Endothelial cell of umbilical vein (primary cell): ENCODE measurements at regions of chr19 and their contacts with region 1.

Region 1: GRCh38 chr19:16382775-16383543 is 58.3 kb downstream of the KLF2 start:
- DNase-seq: peak; percentile 86
- H3K4me3 ChIP-seq: no peak overlapping the region
- H3K27ac ChIP-seq: peak overlapping the region; percentile 46
- H3K4me1 ChIP-seq: peaks cover 6% of the 10 kb centered on the region
- H3K27me3 ChIP-seq: no peaks in the 10 kb centered on the region
- CTCF ChIP-seq: peak; percentile 78 to 87
- POLR2A ChIP-seq: no peak

Region 2: GRCh38 chr19:15629003-15629880 is 753.7 kb before region 1 on chr19:
- CTCF ChIA-PET with region 1: interaction called, 5 read pairs
- POLR2A ChIA-PET with region 1: no interaction called
- dilution Hi-C with region 1: no loop called
- intact Hi-C with region 1: loop called (anchors 5 kb)
- DNase-seq: peak; percentile 40
- H3K4me3 ChIP-seq: no peak overlapping the region
- H3K27ac ChIP-seq: no peak overlapping the region
- H3K4me1 ChIP-seq: no peaks in the 10 kb centered on the region
- H3K27me3 ChIP-seq: no peaks in the 10 kb centered on the region
- CTCF ChIP-seq: peak; percentile 83
- POLR2A ChIP-seq: no peak

Region 3: DNA sequence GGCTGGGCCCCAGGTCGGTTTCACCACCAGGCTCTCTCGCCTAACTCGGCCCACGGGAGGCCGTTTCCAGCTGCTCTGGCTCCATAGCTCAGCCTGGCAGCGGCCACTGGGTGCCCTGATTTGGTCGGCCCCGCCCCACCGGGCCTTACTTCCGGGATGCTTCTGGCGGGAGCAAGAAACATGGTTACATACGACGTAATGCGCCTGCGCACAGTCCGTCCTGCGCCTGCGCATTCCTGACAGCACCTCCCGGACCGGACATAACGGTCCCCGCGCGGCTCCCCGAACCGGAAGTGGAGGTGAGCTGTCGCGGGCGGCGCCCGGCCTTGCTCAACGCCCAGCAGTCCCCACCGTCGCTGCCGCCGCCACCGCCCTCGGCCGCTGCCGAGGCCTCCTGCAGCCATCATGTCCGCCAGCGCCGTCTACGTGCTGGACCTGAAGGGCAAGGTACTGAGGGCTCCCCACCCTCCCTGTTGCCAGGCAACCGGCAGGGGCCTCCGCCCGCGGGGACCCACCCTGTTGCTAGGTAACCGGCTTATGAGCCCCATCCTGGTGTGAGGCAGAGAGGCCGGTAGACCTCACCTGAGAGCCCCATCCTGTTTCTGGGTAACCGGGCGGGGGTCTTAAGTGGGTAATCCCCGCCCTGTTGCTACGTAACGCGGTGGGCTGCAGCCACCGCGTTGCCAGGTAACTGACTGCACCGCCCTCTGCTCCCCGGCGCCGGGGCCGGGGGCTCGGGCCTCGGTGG is 185.2 kb before region 1 on chr19 and contains the start of gene AP1M1:
- CTCF ChIA-PET with region 1: interaction called, 7 read pairs
- POLR2A ChIA-PET with region 1: no interaction called
- dilution Hi-C with region 1: no loop called
- intact Hi-C with region 1: loop called (anchors 1 kb)
- DNase-seq: peak; percentile 98
- H3K4me3 ChIP-seq: peak within 1 kb of the TSS; percentile 95 to 96 (median 95)
- H3K27ac ChIP-seq: peak within 1 kb of the TSS; percentile 81
- H3K4me1 ChIP-seq: peaks cover 21% of the 10 kb centered on the region
- H3K27me3 ChIP-seq: no peaks in the 10 kb centered on the region
- CTCF ChIP-seq: no peak
- POLR2A ChIP-seq: peak; percentile 88
- total RNA-seq, gene AP1M1: 114 and 129 TPM in 2 replicates

Region 4: DNA sequence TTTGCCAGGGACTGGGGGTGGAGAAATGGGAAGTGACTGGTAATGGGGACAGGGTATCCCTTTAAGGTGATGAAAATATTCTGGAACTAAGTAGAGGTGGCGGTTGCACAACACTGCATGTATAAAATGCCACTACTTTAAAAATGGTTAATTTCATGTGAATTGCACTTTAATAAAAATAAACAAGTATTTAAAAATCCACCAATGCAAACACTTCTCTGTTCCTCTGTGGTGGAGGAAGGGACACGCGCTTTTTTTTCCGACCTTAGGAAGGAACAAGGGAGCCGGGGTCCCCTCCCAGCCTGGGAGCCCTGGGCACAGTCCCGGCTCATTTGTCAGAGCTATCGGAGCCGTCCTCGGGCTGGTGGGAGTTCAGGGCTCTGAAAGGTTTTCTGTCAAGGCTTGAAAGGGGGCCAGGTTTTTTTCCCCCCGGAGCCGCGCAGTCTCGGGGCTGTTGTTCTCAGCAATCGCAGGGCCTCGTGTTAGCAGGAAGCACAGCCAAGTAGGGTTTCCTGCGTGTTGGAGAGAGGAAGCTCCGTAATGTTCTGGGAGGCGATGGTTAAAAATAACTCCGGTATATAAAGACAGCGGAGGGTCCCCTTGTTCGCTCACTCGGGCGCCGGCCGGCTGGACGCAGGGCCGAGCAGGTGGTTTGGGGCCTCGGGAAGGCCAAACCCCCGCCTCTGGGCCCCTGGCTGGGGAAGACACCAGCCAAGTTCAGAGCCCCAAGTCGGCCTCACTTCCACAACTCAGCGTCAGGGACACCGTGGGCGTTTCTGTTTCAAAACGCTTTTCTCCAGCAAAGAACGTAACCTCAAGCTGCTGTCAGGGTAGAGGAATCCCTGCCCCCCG is 99.5 kb before region 1 on chr19:
- CTCF ChIA-PET with region 1: interaction called, 11 read pairs
- POLR2A ChIA-PET with region 1: no interaction called
- dilution Hi-C with region 1: no loop called
- intact Hi-C with region 1: no loop called
- DNase-seq: peak; percentile 97
- H3K4me3 ChIP-seq: peak overlapping the region in 1 of 3 experiments; percentile 2
- H3K27ac ChIP-seq: peak overlapping the region; percentile 97
- H3K4me1 ChIP-seq: peaks cover 28% of the 10 kb centered on the region
- H3K27me3 ChIP-seq: no peaks in the 10 kb centered on the region
- CTCF ChIP-seq: no peak
- POLR2A ChIP-seq: peak; percentile 94

Region 5: GRCh38 chr19:16330368-16330801 is 52.6 kb before region 1 on chr19:
- CTCF ChIA-PET with region 1: interaction called, 99 read pairs
- POLR2A ChIA-PET with region 1: interaction called, 9 read pairs
- dilution Hi-C with region 1: no loop called
- intact Hi-C with region 1: loop called (anchors 1 kb)
- DNase-seq: peak; percentile 81
- H3K4me3 ChIP-seq: no peak overlapping the region
- H3K27ac ChIP-seq: no peak overlapping the region
- H3K4me1 ChIP-seq: peaks cover 28% of the 10 kb centered on the region
- H3K27me3 ChIP-seq: no peaks in the 10 kb centered on the region
- CTCF ChIP-seq: no peak
- POLR2A ChIP-seq: no peak

Region 6: GRCh38 chr19:16371540-16371986 is 11.4 kb before region 1 on chr19:
- CTCF ChIA-PET with region 1: interaction called, 21 read pairs
- POLR2A ChIA-PET with region 1: no interaction called
- dilution Hi-C with region 1: no loop called
- intact Hi-C with region 1: no loop called
- DNase-seq: no peak
- H3K4me3 ChIP-seq: no peak overlapping the region
- H3K27ac ChIP-seq: no peak overlapping the region
- H3K4me1 ChIP-seq: peaks cover 13% of the 10 kb centered on the region
- H3K27me3 ChIP-seq: no peaks in the 10 kb centered on the region
- CTCF ChIP-seq: no peak
- POLR2A ChIP-seq: no peak